AG04450 (cell line): ENCODE measurements at regions of chr2 and their contacts with region 1.

Region 1: GRCh38 chr2:227890495-227891079 is 19.2 kb downstream of the DAW1 start:
- DNase-seq: peak; percentile 10
- H3K4me3 ChIP-seq: no peak overlapping the region
- H3K27ac ChIP-seq: no peak overlapping the region
- H3K27me3 ChIP-seq: no peaks in the 10 kb centered on the region
- CTCF ChIP-seq: peak; percentile 62

Region 2: GRCh38 chr2:227766373-227766883 is 124.2 kb before region 1 on chr2:
- CTCF ChIA-PET with region 1: interaction called, 17 read pairs
- POLR2A ChIA-PET with region 1: no interaction called
- DNase-seq: peak; percentile 50
- H3K4me3 ChIP-seq: no peak overlapping the region
- H3K27ac ChIP-seq: peak overlapping the region; percentile 21
- H3K27me3 ChIP-seq: no peaks in the 10 kb centered on the region
- CTCF ChIP-seq: peak; percentile 83

Region 3: GRCh38 chr2:227871375-227871788 is 19.2 kb before region 1 on chr2 and contains the start of gene DAW1:
- CTCF ChIA-PET with region 1: interaction called, 39 read pairs
- POLR2A ChIA-PET with region 1: no interaction called
- DNase-seq: no peak
- H3K4me3 ChIP-seq: peak within 1 kb of the TSS; percentile 55
- H3K27ac ChIP-seq: peak within 1 kb of the TSS; percentile 73
- H3K27me3 ChIP-seq: no peaks in the 10 kb centered on the region
- CTCF ChIP-seq: no peak
- polyA plus RNA-seq, gene DAW1: 0.12 and 0.25 TPM in 2 replicates

Region 4: DNA sequence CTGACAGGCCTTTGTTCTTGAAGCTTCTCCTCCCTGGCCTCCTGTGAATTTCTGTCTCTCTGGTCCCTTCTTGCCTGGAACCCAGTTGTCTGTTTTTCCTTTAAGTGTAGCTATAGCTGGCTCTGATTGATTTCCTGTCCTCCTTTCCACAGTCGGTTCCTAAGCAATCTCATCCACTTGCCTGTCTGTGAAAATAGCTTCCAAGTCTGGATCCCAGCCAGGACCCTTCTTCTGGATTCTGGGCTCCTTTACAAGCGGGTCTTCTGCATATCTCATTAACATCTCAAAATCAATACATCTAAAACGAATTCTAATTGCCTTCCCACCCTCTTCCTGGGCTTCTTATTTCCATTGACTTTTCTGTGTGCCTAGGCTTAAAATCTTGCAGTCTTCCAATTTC is 105.8 kb after region 1 on chr2:
- CTCF ChIA-PET with region 1: no interaction called
- POLR2A ChIA-PET with region 1: no interaction called
- DNase-seq: no peak
- H3K4me3 ChIP-seq: no peak overlapping the region
- H3K27ac ChIP-seq: no peak overlapping the region
- H3K27me3 ChIP-seq: no peaks in the 10 kb centered on the region
- CTCF ChIP-seq: no peak

Region 5: GRCh38 chr2:228602288-228602687 is 711.7 kb after region 1 on chr2:
- CTCF ChIA-PET with region 1: no interaction called
- POLR2A ChIA-PET with region 1: no interaction called
- DNase-seq: no peak
- H3K4me3 ChIP-seq: no peak overlapping the region
- H3K27ac ChIP-seq: no peak overlapping the region
- H3K27me3 ChIP-seq: no peaks in the 10 kb centered on the region
- CTCF ChIP-seq: no peak

Region 6: GRCh38 chr2:228657807-228658402 is 767.3 kb after region 1 on chr2:
- CTCF ChIA-PET with region 1: interaction called, 41 read pairs
- POLR2A ChIA-PET with region 1: no interaction called
- DNase-seq: no peak
- H3K4me3 ChIP-seq: no peak overlapping the region
- H3K27ac ChIP-seq: no peak overlapping the region
- H3K27me3 ChIP-seq: no peaks in the 10 kb centered on the region
- CTCF ChIP-seq: peak; percentile 59

Region 7: DNA sequence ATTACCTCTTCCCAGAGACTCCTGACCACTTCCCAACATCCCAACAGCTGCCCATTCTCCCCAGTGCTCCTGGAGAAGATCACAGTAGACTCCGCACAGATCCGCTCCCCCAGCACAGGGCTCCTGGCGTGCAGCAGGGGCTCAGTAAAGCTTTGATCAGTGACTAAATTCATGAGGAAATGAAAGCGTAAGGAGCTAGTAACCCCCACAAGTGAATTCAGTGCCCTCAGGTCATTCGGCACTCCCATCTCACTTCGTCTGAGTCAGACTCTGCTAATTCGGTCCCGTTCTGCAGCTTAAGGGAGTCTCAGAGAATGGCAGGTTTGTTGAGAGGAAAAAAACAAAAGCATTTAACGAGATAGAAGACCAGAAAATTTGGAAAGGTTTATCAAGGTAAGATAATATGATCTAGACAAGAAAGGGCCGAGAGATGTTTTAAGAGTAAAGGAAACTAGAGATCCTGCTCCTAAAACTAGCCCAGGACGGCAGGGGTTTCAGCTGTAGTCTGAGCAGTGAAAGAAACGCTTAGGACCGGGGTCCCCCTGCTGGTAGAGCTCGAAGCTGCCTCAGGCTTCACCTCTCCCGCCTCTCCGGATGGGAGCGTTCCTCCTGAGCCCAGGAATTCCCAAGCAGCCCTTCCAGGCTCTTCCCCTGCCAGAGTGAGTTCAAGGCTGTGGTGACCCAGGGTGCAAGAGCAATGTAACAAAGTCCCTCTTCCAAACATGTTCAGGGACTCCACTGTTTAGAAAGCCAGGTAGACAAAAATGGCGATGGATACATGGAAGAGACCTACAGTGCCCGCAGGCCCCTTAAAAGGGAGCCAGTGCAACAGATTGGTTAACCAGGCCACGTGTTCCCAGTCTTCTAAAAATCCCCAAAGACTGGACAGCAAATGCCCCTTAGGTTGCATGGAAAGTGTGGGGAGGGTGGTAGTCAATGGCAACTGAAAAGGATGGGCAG is 1696.4 kb after region 1 on chr2:
- CTCF ChIA-PET with region 1: interaction called, 17 read pairs
- POLR2A ChIA-PET with region 1: no interaction called
- DNase-seq: peak; percentile 24
- H3K4me3 ChIP-seq: no peak overlapping the region; the same call in 1 of the 2 replicates
- H3K27ac ChIP-seq: no peak overlapping the region
- H3K27me3 ChIP-seq: no peaks in the 10 kb centered on the region
- CTCF ChIP-seq: peak; percentile 90